ENCODE measurements at regions of chr16 and their contacts with region 1.

Region 1: GRCh38 chr16:57734925-57735754 is 430 bp upstream of the KATNB1 start:
- DNase-seq: peak; percentile 99 to 100 (median 100)
- H3K4me3 ChIP-seq: peak overlapping the region; percentile 84 to 93 (median 91)
- H3K4me3 Mint-ChIP-seq: peak overlapping the region; percentile 96 to 99
- H3K27ac ChIP-seq: peak overlapping the region; percentile 41 to 88
- H3K27ac Mint-ChIP-seq: peak overlapping the region; percentile 87 to 98 (median 95)
- H3K4me1 ChIP-seq: peaks cover 22 to 26% of the 10 kb centered on the region in 2 donors
- H3K4me1 Mint-ChIP-seq: peaks cover 21% of the 10 kb centered on the region
- H3K27me3 ChIP-seq: no peaks in the 10 kb centered on the region
- H3K27me3 Mint-ChIP-seq: peaks cover 0 to 3% (median 2%) of the 10 kb centered on the region in 3 donors
- CTCF ChIP-seq: no peak

Region 2: GRCh38 chr16:56108056-56108471 is 1627.1 kb before region 1 on chr16:
- intact Hi-C with region 1: no loop called
- DNase-seq: no peak
- H3K4me3 ChIP-seq: no peak overlapping the region
- H3K4me3 Mint-ChIP-seq: no peak overlapping the region
- H3K27ac ChIP-seq: no peak overlapping the region
- H3K27ac Mint-ChIP-seq: no peak overlapping the region
- H3K4me1 ChIP-seq: no peaks in the 10 kb centered on the region
- H3K4me1 Mint-ChIP-seq: no peaks in the 10 kb centered on the region
- H3K27me3 ChIP-seq: no peaks in the 10 kb centered on the region
- H3K27me3 Mint-ChIP-seq: peaks cover under 1 to 7% (median 3%) of the 10 kb centered on the region in 3 donors
- CTCF ChIP-seq: no peak

Region 3: DNA sequence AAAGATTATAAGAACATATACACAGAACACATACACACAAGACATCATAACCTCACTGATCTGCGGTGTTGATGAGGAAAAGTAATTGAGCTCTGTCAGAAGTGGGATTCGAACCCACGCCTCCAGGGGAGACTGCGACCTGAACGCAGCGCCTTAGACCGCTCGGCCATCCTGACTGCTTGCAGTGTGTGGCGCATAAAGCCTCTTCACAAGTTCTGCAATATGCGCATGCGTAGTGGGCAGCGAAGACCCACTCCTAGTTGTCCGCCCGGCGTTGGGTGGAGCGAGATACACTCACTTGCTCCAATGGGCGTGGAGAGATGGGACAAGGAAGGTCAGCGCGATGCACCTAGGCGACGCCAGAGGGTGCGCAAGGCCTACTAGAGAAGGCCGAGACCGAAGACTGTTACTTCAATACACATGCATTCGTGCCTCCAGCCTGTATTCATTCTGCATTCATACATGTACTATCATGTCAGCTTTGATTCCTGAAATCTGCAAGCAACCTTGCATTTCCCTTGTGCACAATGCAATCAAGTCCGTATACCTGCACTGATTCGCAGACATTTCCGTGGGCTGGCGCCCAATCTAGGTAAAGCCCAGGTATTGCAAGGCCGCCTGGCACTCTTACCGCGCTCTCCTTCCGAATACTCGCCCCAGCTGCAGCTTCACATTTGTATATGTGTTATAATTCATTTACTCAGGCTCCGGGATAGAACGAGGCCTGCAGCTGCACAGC is 434.6 kb before region 1 on chr16:
- intact Hi-C with region 1: loop called in 1 of 2 experiments (anchors 10 kb)
- DNase-seq: peak; percentile 99
- H3K4me3 ChIP-seq: peak overlapping the region; percentile 56 to 87 (median 59)
- H3K4me3 Mint-ChIP-seq: peak overlapping the region in 1 of 2 donors; percentile 59
- H3K27ac ChIP-seq: peak overlapping the region; percentile 80
- H3K27ac Mint-ChIP-seq: no peak overlapping the region
- H3K4me1 ChIP-seq: peaks cover 19 to 20% of the 10 kb centered on the region in 2 donors
- H3K4me1 Mint-ChIP-seq: peaks cover 4% of the 10 kb centered on the region
- H3K27me3 ChIP-seq: no peaks in the 10 kb centered on the region
- H3K27me3 Mint-ChIP-seq: peaks cover 14 to 18% (median 15%) of the 10 kb centered on the region in 3 donors
- CTCF ChIP-seq: peak; percentile 91

Region 4: GRCh38 chr16:57462209-57462977 is 272.7 kb before region 1 on chr16 and contains the start of gene POLR2C:
- intact Hi-C with region 1: loop called in 1 of 2 experiments (anchors 10 kb)
- DNase-seq: peak; percentile 86 to 87 (median 87)
- H3K4me3 ChIP-seq: peak within 1 kb of the TSS; percentile 53 to 85 (median 74)
- H3K4me3 Mint-ChIP-seq: peak within 1 kb of the TSS; percentile 99
- H3K27ac ChIP-seq: peak within 1 kb of the TSS; percentile 9 to 80
- H3K27ac Mint-ChIP-seq: peak within 1 kb of the TSS; percentile 94 to 99 (median 97)
- H3K4me1 ChIP-seq: peaks cover 9 to 11% of the 10 kb centered on the region in 2 donors
- H3K4me1 Mint-ChIP-seq: peaks cover 22% of the 10 kb centered on the region
- H3K27me3 ChIP-seq: no peaks in the 10 kb centered on the region
- H3K27me3 Mint-ChIP-seq: peaks cover 0 to 3% (median 2%) of the 10 kb centered on the region in 3 donors
- CTCF ChIP-seq: peak; percentile 97
- polyA plus RNA-seq, gene POLR2C: 22.6 to 51.3 (median 24.4) TPM

Region 5: DNA sequence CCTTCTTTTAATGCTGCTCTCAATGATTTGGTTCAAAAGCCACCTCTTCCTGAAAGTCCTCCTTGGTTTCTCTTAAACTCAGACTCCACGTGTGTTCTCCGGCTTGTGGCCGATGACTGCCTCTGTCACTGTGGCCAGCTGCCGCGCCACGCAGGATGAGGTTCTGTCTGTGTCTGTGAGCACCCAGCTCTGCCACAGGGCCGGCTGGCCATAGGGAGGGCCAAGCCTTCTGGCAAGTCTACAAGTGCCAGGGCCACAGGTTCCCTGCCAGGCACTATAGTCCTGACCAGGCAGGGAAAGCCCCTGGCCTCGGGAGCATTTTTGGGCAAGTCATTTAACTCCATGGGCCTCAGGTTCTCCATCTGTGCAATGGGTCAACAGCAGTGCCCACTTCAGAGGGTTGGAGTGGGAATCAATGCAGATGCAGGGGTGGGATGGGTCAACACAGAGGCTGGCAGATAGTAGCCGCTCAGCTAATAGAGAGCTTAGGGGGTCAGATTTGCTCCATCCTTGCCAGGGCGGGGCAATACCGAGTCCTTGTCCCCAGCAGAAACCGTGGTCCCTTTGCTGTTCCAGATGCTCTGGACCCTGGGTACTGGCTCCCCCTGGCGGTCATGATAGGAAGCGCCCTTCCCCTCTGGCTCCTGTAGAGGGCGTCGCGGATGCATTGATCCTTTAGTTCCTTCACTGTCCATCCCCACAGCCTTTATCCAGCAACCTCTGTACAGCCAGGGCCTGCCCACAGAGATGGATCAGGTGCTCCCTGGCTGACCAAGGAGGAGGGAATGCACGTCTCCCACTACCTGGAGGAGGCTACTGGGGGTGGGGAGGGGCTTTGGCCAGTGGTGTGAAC is 86.3 kb before region 1 on chr16:
- intact Hi-C with region 1: loop called in 1 of 2 experiments (anchors 5 kb)
- DNase-seq: peak; percentile 82 to 86 (median 83)
- H3K4me3 ChIP-seq: no peak overlapping the region
- H3K4me3 Mint-ChIP-seq: no peak overlapping the region
- H3K27ac ChIP-seq: peak overlapping the region; percentile 48 to 58
- H3K27ac Mint-ChIP-seq: peak overlapping the region; percentile 26 to 93 (median 83)
- H3K4me1 ChIP-seq: peaks cover 24 to 25% of the 10 kb centered on the region in 2 donors
- H3K4me1 Mint-ChIP-seq: peaks cover 25% of the 10 kb centered on the region
- H3K27me3 ChIP-seq: peaks cover 2 to 34% of the 10 kb centered on the region in 2 donors
- H3K27me3 Mint-ChIP-seq: peaks cover 23 to 39% (median 32%) of the 10 kb centered on the region in 3 donors
- CTCF ChIP-seq: peak; percentile 100

Region 6: GRCh38 chr16:57694725-57695679 is 40.1 kb before region 1 on chr16 and contains the start of gene DRC7:
- intact Hi-C with region 1: loop called (anchors 5 kb)
- DNase-seq: peak; percentile 76 to 79 (median 76)
- H3K4me3 ChIP-seq: peak within 1 kb of the TSS; percentile 40 to 76 (median 49)
- H3K4me3 Mint-ChIP-seq: peak within 1 kb of the TSS; percentile 83 to 94
- H3K27ac ChIP-seq: peak within 1 kb of the TSS; percentile 73 to 85
- H3K27ac Mint-ChIP-seq: peak within 1 kb of the TSS; percentile 93 to 98 (median 97)
- H3K4me1 ChIP-seq: peaks cover 30 to 35% of the 10 kb centered on the region in 2 donors
- H3K4me1 Mint-ChIP-seq: peaks cover 32% of the 10 kb centered on the region
- H3K27me3 ChIP-seq: no peaks in the 10 kb centered on the region
- H3K27me3 Mint-ChIP-seq: peaks cover 1 to 2% (median 2%) of the 10 kb centered on the region in 3 donors
- CTCF ChIP-seq: no peak
- polyA plus RNA-seq, gene DRC7: 0.11 to 0.41 TPM in 2 of 3 donors, not detected in the other

Region 7: DNA sequence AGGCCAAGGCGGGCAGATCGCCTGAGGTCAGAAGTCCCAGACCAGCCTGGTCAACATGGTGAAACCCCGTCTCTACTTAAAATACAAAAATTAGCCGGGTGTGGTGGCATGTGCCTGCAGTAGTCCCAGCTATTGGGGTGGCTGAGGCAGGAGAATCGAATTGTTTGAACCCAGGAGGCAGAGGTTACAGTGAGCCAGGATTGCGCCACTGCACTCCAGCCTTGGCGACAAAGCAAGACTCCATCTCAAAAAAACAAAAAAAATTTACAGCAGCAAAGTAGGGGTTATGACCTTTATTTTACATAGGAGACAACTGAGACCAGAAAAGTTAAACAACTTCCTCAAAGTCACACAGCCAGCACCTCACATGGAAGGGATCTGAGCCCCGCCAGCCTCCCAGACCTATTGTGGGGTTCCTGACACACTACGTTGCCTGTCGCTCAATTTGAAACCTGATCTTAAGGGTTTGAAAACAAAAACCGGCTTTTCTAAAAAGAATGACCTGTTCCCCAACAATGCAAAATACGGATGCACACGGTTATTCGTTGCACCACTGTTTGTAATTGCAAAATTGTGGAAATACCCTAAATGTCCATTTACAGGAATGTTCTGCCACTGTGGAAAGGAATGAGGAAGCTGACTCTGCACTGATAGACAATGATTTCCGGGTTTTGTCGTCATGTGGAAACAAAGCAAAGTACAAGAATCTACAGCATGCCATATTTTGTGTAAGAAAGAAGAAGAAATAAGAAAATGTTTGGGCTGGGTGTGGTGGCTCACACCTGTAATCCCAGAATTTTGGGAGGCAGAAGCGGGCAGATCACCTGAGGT is 158.6 kb after region 1 on chr16:
- intact Hi-C with region 1: loop called in 1 of 2 experiments (anchors 1 kb)
- DNase-seq: peak; percentile 93 to 97 (median 96)
- H3K4me3 ChIP-seq: peak overlapping the region in 1 of 3 experiments; percentile 60
- H3K4me3 Mint-ChIP-seq: peak overlapping the region; percentile 28 to 88
- H3K27ac ChIP-seq: peak overlapping the region; percentile 85 to 98
- H3K27ac Mint-ChIP-seq: peak overlapping the region; percentile 92 to 98 (median 96)
- H3K4me1 ChIP-seq: peaks cover 49 to 53% of the 10 kb centered on the region in 2 donors
- H3K4me1 Mint-ChIP-seq: peaks cover 58% of the 10 kb centered on the region
- H3K27me3 ChIP-seq: no peaks in the 10 kb centered on the region
- H3K27me3 Mint-ChIP-seq: peaks cover 0 to 2% (median 0%) of the 10 kb centered on the region in 3 donors
- CTCF ChIP-seq: no peak

Region 8: GRCh38 chr16:58129097-58129936 is 394.2 kb after region 1 on chr16 and contains the start of gene CFAP20:
- intact Hi-C with region 1: loop called in 1 of 2 experiments (anchors 10 kb)
- DNase-seq: peak; percentile 99 to 100 (median 99)
- H3K4me3 ChIP-seq: peak within 1 kb of the TSS; percentile 91 to 98 (median 94)
- H3K4me3 Mint-ChIP-seq: peak within 1 kb of the TSS; percentile 87 to 95
- H3K27ac ChIP-seq: peak within 1 kb of the TSS; percentile 83 to 92
- H3K27ac Mint-ChIP-seq: peak within 1 kb of the TSS; percentile 84 to 96 (median 91)
- H3K4me1 ChIP-seq: peaks cover 21 to 30% of the 10 kb centered on the region in 2 donors
- H3K4me1 Mint-ChIP-seq: peaks cover 32% of the 10 kb centered on the region
- H3K27me3 ChIP-seq: no peaks in the 10 kb centered on the region
- H3K27me3 Mint-ChIP-seq: no peaks in the 10 kb centered on the region
- CTCF ChIP-seq: no peak
- polyA plus RNA-seq, gene CFAP20: 17.3 to 24.0 (median 18.8) TPM

Measured in CD14-positive monocyte (primary cell).